CD8-positive, alpha-beta T cell (primary cell): ENCODE measurements at regions of chr3 and their contacts with region 1.

Region 1: DNA sequence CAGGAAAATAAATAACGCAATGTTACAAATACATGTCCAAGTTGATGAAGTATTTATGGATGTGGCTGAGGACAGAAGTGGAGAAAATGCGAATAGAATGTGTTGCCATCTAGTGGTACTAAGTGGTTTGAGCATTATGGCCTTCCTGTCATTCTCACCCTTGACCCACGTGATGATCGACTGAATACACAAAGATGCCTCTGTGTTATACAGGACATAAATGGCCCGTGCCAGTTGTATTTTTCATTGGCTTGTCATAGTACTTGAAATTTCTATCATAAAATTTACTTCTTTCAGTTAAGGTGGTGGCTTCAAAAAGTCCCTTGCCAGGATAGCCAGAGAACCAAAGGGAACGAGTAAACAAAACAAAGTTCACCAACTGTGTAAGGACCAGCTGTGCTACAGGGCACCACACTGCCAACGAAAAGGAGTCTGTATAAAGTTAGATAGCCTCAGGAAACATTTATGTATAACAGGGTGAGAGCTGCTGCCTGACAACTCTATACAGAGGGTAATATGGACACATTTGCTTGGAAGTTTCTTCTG is 103.7 kb downstream of the MYH15 start:
- DNase-seq: peak in 3 of 9 experiments; percentile 22 to 78 (median 55)
- ATAC-seq: peak; percentile 79
- H3K4me3 ChIP-seq: no peak overlapping the region
- H3K4me3 Mint-ChIP-seq: no peak overlapping the region
- H3K27ac ChIP-seq: no peak overlapping the region
- H3K27ac Mint-ChIP-seq: no peak overlapping the region
- H3K4me1 ChIP-seq: no peaks in the 10 kb centered on the region
- H3K4me1 Mint-ChIP-seq: peaks cover 3% of the 10 kb centered on the region
- H3K27me3 ChIP-seq: no peaks in the 10 kb centered on the region
- H3K27me3 Mint-ChIP-seq: no peaks in the 10 kb centered on the region
- CTCF ChIP-seq: peak; percentile 40

Region 2: DNA sequence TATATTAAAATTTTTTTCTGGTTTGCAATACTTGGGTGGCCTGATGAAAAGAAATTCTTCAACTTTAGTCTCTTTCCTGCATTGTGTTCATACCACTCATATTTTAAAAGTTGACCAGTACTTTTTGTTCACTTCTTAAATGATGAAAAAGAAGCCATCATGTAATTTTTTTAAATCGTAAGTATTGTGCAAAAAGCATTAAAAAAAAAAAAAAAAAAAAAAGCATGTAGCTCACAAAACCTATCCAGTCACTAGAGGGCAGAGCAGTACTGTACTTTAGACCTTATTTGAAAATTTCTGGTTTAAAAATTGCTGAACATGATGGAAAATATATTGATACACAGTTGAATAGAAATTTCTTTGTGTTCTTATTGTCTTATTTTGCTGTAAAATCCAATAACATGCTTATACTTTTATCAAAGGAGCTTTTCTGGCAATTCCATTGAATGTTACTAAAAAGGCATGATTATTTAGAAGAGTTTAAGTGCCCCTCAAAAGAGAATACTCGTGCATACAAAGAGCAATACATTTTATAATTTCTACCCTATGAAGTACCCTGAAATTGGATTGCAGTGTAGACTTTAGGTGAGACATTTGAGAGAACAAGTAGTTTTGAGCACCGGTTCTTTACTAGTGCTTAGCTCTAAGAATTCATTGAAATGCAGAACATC is 746.3 kb before region 1 on chr3:
- CTCF ChIA-PET with region 1: no interaction called
- POLR2A ChIA-PET with region 1: no interaction called
- intact Hi-C with region 1: loop called in 1 of 2 experiments (anchors 5 kb)
- DNase-seq: peak in 2 of 9 experiments; percentile 52 to 61
- ATAC-seq: no peak
- H3K4me3 ChIP-seq: no peak overlapping the region
- H3K4me3 Mint-ChIP-seq: no peak overlapping the region
- H3K27ac ChIP-seq: no peak overlapping the region
- H3K27ac Mint-ChIP-seq: no peak overlapping the region
- H3K4me1 ChIP-seq: peaks cover 17% of the 10 kb centered on the region
- H3K4me1 Mint-ChIP-seq: peaks cover 31% of the 10 kb centered on the region
- H3K27me3 ChIP-seq: no peaks in the 10 kb centered on the region
- H3K27me3 Mint-ChIP-seq: no peaks in the 10 kb centered on the region
- CTCF ChIP-seq: peak; percentile 73

Region 3: DNA sequence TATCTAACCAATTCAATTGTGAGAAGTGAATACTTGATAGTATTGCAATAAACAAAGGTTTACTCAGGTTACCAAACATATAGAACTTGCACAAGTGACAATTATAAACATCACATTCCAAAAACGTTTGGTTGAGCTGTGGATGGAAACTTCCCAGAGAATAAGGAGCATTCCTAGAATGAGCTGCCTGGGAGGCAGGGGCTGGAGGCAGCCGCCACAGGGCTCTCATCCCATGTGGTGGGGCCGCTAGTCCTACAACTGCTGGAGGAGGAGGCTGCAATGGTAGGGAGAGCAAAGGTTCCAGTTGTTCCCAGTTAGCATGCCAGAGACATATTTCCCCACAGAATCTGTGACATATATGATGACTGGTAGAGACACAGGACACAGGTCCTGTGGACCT is 366.3 kb before region 1 on chr3:
- CTCF ChIA-PET with region 1: no interaction called
- POLR2A ChIA-PET with region 1: interaction called, 3 read pairs
- intact Hi-C with region 1: loop called in 1 of 2 experiments (anchors 10 kb)
- DNase-seq: no peak
- ATAC-seq: no peak
- H3K4me3 ChIP-seq: no peak overlapping the region
- H3K4me3 Mint-ChIP-seq: no peak overlapping the region
- H3K27ac ChIP-seq: no peak overlapping the region
- H3K27ac Mint-ChIP-seq: peak overlapping the region; percentile 55
- H3K4me1 ChIP-seq: peaks cover 8% of the 10 kb centered on the region
- H3K4me1 Mint-ChIP-seq: peaks cover 26% of the 10 kb centered on the region
- H3K27me3 ChIP-seq: no peaks in the 10 kb centered on the region
- H3K27me3 Mint-ChIP-seq: no peaks in the 10 kb centered on the region
- CTCF ChIP-seq: no peak

Region 4: GRCh38 chr3:108062051-108062450 is 344.7 kb before region 1 on chr3:
- CTCF ChIA-PET with region 1: no interaction called
- POLR2A ChIA-PET with region 1: no interaction called
- intact Hi-C with region 1: loop called in 1 of 2 experiments (anchors 10 kb)
- DNase-seq: peak in 1 of 9 experiments; percentile 14
- ATAC-seq: no peak
- H3K4me3 ChIP-seq: no peak overlapping the region
- H3K4me3 Mint-ChIP-seq: no peak overlapping the region
- H3K27ac ChIP-seq: no peak overlapping the region
- H3K27ac Mint-ChIP-seq: peak overlapping the region; percentile 41
- H3K4me1 ChIP-seq: peaks cover 18% of the 10 kb centered on the region
- H3K4me1 Mint-ChIP-seq: peaks cover 69% of the 10 kb centered on the region
- H3K27me3 ChIP-seq: no peaks in the 10 kb centered on the region
- H3K27me3 Mint-ChIP-seq: no peaks in the 10 kb centered on the region
- CTCF ChIP-seq: no peak

Region 5: DNA sequence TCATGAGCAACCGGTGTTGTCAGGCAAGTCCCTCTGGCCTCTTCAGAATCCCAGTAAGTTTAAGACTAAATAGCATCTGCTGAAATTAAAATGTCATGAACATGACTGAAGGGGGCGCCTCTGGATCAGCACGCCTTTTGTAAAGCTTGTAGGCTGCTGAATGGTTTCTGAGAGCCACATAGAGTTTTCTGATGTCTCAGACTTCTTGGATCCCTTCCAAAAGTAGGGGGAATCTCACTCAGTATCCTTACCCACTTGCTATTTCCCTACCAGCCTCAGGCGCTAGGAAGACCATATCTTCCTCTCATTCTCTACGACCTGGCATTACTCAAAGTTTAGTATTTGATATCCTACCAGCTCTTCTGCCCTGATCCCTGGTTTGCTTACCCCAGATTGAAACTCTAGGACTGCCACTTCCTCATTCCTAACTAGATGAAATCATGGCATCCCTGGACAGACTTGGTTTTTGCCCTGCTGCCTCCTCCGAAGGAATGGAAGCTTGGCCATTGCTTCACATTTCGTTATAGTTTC is 253.2 kb before region 1 on chr3:
- CTCF ChIA-PET with region 1: interaction called, 6 read pairs
- POLR2A ChIA-PET with region 1: no interaction called
- intact Hi-C with region 1: loop called (anchors 1 to 5 kb)
- DNase-seq: peak in 8 of 9 experiments; percentile 2 to 69 (median 39)
- ATAC-seq: peak; percentile 46
- H3K4me3 ChIP-seq: no peak overlapping the region
- H3K4me3 Mint-ChIP-seq: no peak overlapping the region
- H3K27ac ChIP-seq: no peak overlapping the region
- H3K27ac Mint-ChIP-seq: no peak overlapping the region
- H3K4me1 ChIP-seq: no peaks in the 10 kb centered on the region
- H3K4me1 Mint-ChIP-seq: peaks cover 3% of the 10 kb centered on the region
- H3K27me3 ChIP-seq: no peaks in the 10 kb centered on the region
- H3K27me3 Mint-ChIP-seq: no peaks in the 10 kb centered on the region
- CTCF ChIP-seq: peak; percentile 54